PC-3 (cell line): ENCODE measurements at regions of chr5 and their contacts with region 1.

Region 1: DNA sequence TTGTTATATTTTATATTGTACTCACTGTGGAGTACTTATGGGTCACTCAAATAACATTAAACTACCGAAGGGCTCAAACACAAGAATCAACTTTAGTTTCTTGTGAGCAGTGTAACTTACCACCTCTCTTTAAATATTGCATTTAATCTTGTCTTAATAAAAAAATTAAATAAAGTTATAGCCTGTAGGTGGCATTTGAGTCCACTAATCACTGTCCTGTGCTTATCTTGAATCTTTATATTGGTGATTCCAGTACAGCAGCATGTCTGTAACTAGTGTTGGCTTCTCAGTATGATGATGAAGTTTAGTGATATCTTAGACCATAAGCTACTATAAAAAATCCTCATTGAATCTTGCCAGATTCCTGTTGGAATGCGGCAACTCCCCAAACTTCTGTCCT is 313.8 kb downstream of the FAM170A start:
- DNase-seq: peak; percentile 26
- ATAC-seq: peak; percentile 63
- H3K4me3 ChIP-seq: no peak overlapping the region
- H3K27ac ChIP-seq: no peak overlapping the region
- H3K4me1 ChIP-seq: no peaks in the 10 kb centered on the region
- H3K27me3 ChIP-seq: no peaks in the 10 kb centered on the region
- CTCF ChIP-seq: peak; percentile 51; the same call in 1 of the 2 replicates

Region 2: DNA sequence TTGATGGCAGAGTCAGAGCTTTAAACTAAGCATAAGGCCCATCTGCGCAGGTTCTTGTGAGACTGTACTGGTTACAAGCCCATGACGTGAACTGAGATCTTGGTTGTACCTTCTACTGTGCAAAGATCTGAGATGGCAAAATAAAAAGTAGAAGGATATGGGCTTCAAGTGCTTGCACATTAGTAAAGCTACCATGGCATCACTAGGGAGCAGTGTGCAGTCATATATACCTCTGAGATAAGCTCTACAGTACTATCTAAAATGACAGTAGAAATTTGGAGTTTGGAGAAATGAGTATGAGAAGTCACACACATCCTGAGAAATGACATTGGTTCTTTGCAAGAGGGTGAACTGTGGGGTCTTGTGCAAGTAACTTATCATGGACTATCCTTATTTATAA is 112.7 kb after region 1 on chr5:
- CTCF ChIA-PET with region 1: no interaction called
- POLR2A ChIA-PET with region 1: no interaction called
- intact Hi-C with region 1: loop called (anchors 5 kb)
- DNase-seq: peak; percentile 32
- ATAC-seq: peak; percentile 87
- H3K4me3 ChIP-seq: no peak overlapping the region
- H3K27ac ChIP-seq: no peak overlapping the region
- H3K4me1 ChIP-seq: no peaks in the 10 kb centered on the region
- H3K27me3 ChIP-seq: no peaks in the 10 kb centered on the region
- CTCF ChIP-seq: peak; percentile 51; the same call in 1 of the 2 replicates

Region 3: GRCh38 chr5:120152472-120152871 is 209.3 kb after region 1 on chr5:
- CTCF ChIA-PET with region 1: no interaction called
- POLR2A ChIA-PET with region 1: no interaction called
- intact Hi-C with region 1: loop called (anchors 10 kb)
- DNase-seq: peak; percentile 76
- ATAC-seq: peak; percentile 96
- H3K4me3 ChIP-seq: peak overlapping the region; percentile 34; the same call in 1 of the 2 replicates
- H3K27ac ChIP-seq: peak overlapping the region; percentile 93
- H3K4me1 ChIP-seq: peaks cover 20% of the 10 kb centered on the region
- H3K27me3 ChIP-seq: no peaks in the 10 kb centered on the region
- CTCF ChIP-seq: no peak

Region 4: DNA sequence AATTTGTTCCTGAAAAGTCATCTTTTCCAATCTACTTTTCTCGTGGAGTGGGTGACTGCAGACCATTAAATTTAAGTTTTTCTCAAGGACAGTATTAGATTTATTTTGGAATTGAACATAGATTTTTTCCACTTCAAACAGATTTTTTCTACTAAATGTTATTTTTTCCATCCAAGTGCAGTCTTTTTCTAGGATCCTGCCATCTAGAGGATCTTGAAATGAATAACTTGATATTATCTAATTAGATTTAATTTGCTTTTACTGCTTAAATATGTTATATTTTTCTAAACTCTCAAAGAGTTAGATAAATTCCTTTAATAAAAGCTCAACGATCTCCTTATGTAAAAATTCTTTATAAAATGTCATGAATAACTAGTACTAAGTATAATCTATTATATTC is 384.0 kb after region 1 on chr5:
- CTCF ChIA-PET with region 1: no interaction called
- POLR2A ChIA-PET with region 1: no interaction called
- intact Hi-C with region 1: loop called (anchors 2 kb)
- DNase-seq: no peak
- ATAC-seq: no peak
- H3K4me3 ChIP-seq: no peak overlapping the region
- H3K27ac ChIP-seq: no peak overlapping the region
- H3K4me1 ChIP-seq: no peaks in the 10 kb centered on the region
- H3K27me3 ChIP-seq: no peaks in the 10 kb centered on the region
- CTCF ChIP-seq: peak; percentile 44